ENCODE measurements at regions of chr5 and their contacts with region 1.

Region 1: DNA sequence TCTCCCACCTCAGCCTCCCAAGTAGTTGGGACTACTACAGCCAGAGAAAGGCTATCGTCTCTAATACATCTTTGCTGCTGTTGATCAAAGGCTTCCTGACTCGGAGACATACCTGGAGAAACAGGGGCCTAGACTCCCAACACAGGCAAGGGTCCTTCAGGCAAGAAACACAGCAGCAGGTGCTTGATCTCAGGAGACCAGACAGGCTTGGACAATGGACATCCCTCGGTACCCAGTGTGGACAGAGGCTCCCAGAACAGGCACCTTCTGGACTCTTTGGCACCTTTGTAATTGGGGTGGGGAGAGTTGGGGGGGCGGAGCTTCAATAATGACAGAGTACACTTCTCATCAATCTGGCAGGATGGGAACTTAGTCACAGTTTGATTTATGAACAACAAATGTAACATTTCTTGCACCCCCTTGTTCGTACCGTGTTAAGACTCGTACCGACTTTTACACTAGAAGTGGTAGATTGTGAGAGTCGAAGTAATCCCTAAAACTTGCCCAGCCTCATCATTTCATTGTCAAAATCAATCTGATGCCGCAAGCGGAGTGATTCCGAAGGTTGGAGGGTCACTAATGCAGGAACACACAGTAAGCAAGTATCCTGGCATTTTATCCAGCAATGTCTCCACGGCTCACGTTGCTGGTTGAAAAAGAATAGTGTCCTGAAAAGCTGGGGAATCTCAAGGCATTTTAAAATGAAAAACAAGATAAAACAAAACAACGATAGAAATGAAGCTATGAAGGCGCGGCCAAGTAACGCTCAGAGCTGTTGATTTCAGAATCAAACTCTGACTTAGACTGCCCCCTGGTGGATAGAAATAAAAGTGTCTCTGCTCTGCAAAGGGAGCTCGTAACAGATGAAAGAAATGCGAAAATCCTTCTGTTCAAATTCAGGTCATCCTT is 46.4 kb upstream of the STK32A start:
- DNase-seq: peak in 2 of 3 donors; percentile 27 to 57
- ATAC-seq: peak; percentile 73 to 76
- H3K4me3 ChIP-seq: no peak overlapping the region
- H3K27ac ChIP-seq: no peak overlapping the region
- H3K4me1 ChIP-seq: no peaks in the 10 kb centered on the region
- H3K27me3 ChIP-seq: peaks cover 2% of the 10 kb centered on the region

Region 2: GRCh38 chr5:146533260-146533857 is 655.1 kb before region 1 on chr5:
- intact Hi-C with region 1: loop called in 1 of 4 experiments (anchors 10 kb)
- DNase-seq: peak; percentile 54 to 79 (median 67)
- ATAC-seq: peak; percentile 64 to 68
- H3K4me3 ChIP-seq: no peak overlapping the region
- H3K27ac ChIP-seq: no peak overlapping the region
- H3K4me1 ChIP-seq: no peaks in the 10 kb centered on the region
- H3K27me3 ChIP-seq: no peaks in the 10 kb centered on the region

Region 3: GRCh38 chr5:146541958-146542849 is 646.2 kb before region 1 on chr5:
- intact Hi-C with region 1: loop called in 3 of 4 experiments (anchors 5 to 10 kb)
- DNase-seq: peak; percentile 71 to 83 (median 82)
- ATAC-seq: peak; percentile 76 to 82
- H3K4me3 ChIP-seq: no peak overlapping the region
- H3K27ac ChIP-seq: no peak overlapping the region
- H3K4me1 ChIP-seq: no peaks in the 10 kb centered on the region
- H3K27me3 ChIP-seq: peaks cover 2% of the 10 kb centered on the region

Region 4: DNA sequence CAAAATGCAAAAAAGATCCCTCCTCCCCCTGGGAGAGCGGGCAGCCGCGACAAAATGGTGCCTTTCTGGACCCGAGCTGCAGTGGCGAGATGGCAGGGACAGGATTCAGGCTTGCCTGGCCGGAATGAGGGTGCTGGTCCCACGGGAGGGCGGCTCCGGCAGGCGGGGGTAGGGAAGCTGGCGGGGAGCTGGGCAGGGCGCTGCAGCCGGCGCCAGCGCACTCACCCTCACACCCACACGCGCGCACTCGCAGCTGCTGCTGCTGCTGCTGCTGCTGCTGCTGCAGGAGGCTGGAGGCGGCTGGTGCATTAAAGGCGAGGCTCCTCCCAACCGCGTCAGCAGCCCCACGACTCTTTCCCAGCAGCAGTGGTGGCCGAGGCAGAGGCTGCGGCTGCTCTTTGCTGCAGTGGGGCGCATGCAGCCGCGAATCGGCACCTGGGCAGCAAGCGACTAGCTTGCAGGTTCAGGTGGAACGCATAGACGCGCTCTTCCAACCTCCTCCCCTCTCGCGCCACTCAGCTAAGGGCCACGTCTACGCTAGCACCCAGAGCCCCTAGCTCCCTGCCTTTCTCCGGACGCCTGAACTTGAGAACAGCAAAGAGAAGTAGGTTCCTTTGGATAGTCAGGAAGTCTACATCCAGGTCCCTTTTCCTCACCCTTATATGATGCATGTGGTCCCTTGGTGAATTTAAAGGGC is 309.8 kb before region 1 on chr5 and contains the start of gene PPP2R2B:
- intact Hi-C with region 1: no loop called
- DNase-seq: peak in 2 of 3 donors; percentile 66 to 68
- ATAC-seq: peak; percentile 63 to 74
- H3K4me3 ChIP-seq: peak within 1 kb of the TSS; percentile 62
- H3K27ac ChIP-seq: no peak within 1 kb of the TSS
- H3K4me1 ChIP-seq: no peaks in the 10 kb centered on the region
- H3K27me3 ChIP-seq: no peaks in the 10 kb centered on the region
- total RNA-seq, gene PPP2R2B: 3.0 to 9.0 (median 4.5) TPM

Measured in right cardiac atrium (tissue), 5 donors.